Calu3 (cell line): ENCODE measurements at regions of chr4 and their contacts with region 1.

Region 1: DNA sequence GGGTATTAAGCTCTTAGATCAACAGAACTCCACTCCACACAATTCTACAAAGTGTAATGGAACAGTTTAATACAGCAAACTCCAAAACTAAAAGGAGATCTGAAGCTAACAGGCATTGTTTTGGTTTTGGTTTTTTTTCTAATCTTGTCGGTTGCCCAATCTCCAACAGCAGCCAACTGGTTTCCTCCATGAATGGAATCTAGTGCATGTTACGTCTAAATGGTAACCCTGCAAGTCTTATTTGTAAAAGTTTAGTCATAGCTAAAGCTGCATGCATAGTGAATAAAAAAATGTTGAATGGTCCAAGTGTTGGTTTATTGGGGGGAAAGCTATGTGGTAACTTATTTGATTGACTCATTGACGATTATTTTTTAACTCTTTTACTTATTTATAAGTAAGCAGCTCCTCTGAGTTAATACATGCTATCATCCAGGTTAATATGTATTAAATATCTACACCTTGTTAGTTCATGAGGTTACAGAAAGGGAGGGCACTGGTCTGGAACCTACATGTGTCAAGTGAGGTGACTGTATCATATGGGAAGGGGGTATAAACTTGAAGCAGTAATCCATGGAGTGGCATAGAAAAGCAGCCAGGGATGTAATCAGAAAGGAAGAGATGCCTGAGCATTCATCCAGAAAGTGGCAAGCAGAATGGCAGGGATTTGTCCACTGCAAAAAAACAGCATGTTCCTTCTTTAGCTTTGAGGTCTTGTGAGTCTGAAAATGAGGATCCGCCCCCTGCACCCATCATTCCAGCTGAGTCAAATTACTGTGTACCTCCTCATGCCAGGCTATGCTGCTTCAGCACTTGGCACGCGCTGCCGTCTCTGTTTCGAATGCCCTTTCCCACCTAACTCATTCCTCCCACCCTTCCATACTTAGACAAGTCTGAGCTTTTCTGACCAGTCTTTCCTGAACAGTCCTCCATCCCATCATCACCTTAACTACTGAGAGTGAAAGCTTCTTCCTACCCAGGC is 81.7 kb downstream of the PDGFC start:
- DNase-seq: peak; percentile 26
- H3K4me3 Mint-ChIP-seq: peak overlapping the region; percentile 63
- H3K27ac Mint-ChIP-seq: peak overlapping the region; percentile 85
- H3K4me1 Mint-ChIP-seq: peaks cover 32% of the 10 kb centered on the region
- H3K27me3 Mint-ChIP-seq: no peaks in the 10 kb centered on the region
- CTCF ChIP-seq: no peak

Region 2: GRCh38 chr4:156660465-156660864 is 229.4 kb before region 1 on chr4:
- CTCF ChIA-PET with region 1: no interaction called
- intact Hi-C with region 1: no loop called
- DNase-seq: no peak
- H3K4me3 Mint-ChIP-seq: no peak overlapping the region
- H3K27ac Mint-ChIP-seq: no peak overlapping the region
- H3K4me1 Mint-ChIP-seq: peaks cover 8% of the 10 kb centered on the region
- H3K27me3 Mint-ChIP-seq: no peaks in the 10 kb centered on the region
- CTCF ChIP-seq: no peak

Region 3: GRCh38 chr4:156931267-156931666 is 41.4 kb after region 1 on chr4:
- CTCF ChIA-PET with region 1: no interaction called
- intact Hi-C with region 1: loop called (anchors 5 kb)
- DNase-seq: peak; percentile 61
- H3K4me3 Mint-ChIP-seq: peak overlapping the region; percentile 45
- H3K27ac Mint-ChIP-seq: peak overlapping the region; percentile 98
- H3K4me1 Mint-ChIP-seq: peaks cover 11% of the 10 kb centered on the region
- H3K27me3 Mint-ChIP-seq: no peaks in the 10 kb centered on the region
- CTCF ChIP-seq: no peak

Region 4: GRCh38 chr4:156941940-156942548 is 52.1 kb after region 1 on chr4:
- CTCF ChIA-PET with region 1: no interaction called
- intact Hi-C with region 1: loop called (anchors 5 kb)
- DNase-seq: peak; percentile 77
- H3K4me3 Mint-ChIP-seq: peak overlapping the region; percentile 52
- H3K27ac Mint-ChIP-seq: peak overlapping the region; percentile 90
- H3K4me1 Mint-ChIP-seq: peaks cover 58% of the 10 kb centered on the region
- H3K27me3 Mint-ChIP-seq: no peaks in the 10 kb centered on the region
- CTCF ChIP-seq: no peak